Heart left ventricle (tissue), 16 donors: ENCODE measurements at regions of chr11 and their contacts with region 1.

Region 1: DNA sequence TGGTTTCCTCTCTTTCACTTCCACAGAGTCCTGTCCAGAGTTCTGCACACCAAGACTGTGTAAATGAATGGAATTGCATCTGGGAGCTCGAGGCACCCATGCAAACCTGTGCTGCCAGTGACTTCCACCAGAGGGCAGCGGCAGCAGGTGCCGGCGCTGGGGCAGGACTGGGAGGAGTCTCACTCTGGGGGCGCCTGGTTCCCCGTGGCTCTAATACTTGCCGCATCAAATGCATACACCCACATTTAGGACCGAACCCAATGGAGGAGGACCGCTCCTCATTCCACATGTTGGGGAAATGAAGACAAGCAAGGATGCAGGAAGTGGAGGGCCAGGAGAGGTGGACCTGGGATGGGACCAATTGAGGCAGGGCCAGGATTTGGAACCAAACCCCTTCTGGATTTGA is 1.1 kb upstream of the CD6 start:
- DNase-seq: peak; percentile 42 to 82 (median 57)
- ATAC-seq: peak; percentile 62 to 79 (median 76)
- H3K4me3 ChIP-seq: no peak overlapping the region
- H3K27ac ChIP-seq: no peak overlapping the region
- H3K4me1 ChIP-seq: peaks cover 0 to 14% (median 0%) of the 10 kb centered on the region in 12 donors
- H3K27me3 ChIP-seq: no peaks in the 10 kb centered on the region
- CTCF ChIP-seq: peak; percentile 75 to 89 (median 84)
- POLR2A ChIP-seq: no peak

Region 2: DNA sequence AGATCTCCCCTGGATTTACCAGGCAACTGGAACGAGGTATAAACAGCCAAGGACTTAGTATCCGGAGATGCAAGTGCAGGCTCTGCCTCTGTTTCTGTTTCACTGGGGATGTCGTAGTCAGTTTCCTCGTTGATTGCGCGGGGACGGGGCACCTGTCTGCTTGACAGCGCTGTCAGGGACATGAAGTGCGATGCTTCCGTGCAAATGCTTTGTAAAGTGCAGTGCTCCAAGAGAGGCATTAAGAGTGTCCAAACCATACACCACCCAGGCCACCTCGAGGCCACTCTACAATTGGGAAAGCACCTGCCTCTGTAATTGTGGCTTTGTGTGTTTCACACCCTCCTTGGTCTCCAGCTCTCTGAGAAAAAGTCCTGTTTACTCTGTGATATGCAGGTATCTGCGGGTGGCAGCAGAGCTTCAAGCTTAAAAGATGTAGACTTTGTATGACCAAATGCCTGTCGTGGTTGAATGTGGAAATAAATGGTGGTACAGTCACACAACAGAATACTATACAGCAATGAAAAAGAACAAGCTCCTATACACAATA is 113.3 kb after region 1 on chr11:
- intact Hi-C with region 1: no loop called
- DNase-seq: no peak
- ATAC-seq: no peak
- H3K4me3 ChIP-seq: no peak overlapping the region
- H3K27ac ChIP-seq: peak overlapping the region in 1 of 12 donors; percentile 70
- H3K4me1 ChIP-seq: peaks cover 0 to 7% (median 0%) of the 10 kb centered on the region in 12 donors
- H3K27me3 ChIP-seq: peaks cover 0 to 3% (median 0%) of the 10 kb centered on the region in 9 donors
- CTCF ChIP-seq: no peak
- POLR2A ChIP-seq: no peak

Region 3: DNA sequence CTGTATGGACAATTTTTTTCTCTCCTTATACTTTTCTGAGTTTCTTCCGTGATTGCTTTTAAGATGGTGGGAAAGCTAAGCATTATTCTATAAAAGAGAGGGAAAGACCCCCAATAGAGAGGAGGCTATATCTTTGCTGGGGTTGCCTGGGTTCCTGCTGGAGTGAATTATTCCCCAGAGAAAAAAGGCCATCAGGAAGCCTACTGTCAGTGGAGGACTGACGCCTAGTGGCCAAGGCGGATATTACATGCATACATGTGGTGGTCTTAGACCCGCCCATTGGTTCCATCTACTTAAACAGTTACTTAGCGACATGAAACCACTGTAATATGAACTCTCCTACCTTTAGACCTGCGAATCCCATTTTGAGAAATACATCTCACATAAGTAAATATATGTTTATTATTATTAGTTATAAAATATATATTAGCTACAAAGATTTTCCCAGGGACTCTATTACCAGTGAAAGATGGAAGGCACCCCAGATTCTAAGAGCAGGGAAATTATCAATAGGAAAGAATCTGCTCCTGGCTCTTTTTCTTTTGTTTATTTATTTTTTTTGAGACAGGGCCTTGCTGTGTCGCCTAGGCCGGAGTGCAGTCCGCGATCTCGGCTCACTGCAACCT is 217.2 kb after region 1 on chr11:
- intact Hi-C with region 1: loop called in 3 of 10 experiments (anchors 1 to 2 kb)
- DNase-seq: peak; percentile 52 to 81 (median 66)
- ATAC-seq: peak in 3 of 4 donors; percentile 64 to 76 (median 72)
- H3K4me3 ChIP-seq: no peak overlapping the region
- H3K27ac ChIP-seq: no peak overlapping the region
- H3K4me1 ChIP-seq: no peaks in the 10 kb centered on the region
- H3K27me3 ChIP-seq: peaks cover 0 to 16% (median 0%) of the 10 kb centered on the region in 9 donors
- CTCF ChIP-seq: peak; percentile 76 to 97 (median 93)
- POLR2A ChIP-seq: no peak